IMR-90 (cell line): ENCODE measurements at regions of chr7 and their contacts with region 1.

Region 1: DNA sequence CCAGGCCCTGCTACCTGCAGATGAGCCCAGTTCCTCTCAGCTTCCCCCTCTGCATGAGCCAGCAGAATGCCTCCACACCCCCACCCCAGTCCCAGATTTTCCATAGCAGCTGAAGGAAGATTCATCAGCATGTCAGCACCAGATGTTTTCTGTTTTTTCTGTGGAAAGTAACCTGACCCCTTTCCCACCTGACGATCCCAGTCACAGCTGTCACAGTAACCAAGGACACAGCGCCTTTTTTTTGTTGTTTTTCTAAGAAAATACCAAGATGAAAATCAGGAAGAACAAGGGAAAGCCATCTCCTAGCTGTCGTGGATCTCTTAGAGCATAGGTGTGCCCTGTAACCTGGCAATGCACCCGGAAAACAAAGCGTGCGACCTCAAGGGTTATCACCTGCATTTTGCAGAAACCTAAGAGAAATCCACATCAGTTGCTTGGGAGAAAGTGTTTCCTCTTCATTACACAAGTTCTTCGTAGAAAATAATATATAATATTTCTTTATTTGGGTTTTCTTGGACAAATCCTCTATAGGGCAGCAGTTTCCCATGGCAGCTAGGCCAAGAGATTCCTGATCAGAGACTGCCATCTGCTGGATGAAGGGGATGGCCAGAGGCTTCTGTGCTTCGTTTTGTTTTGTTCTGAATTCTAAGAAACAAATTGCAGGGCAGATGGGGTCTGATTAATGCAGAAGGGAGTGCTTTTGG is 401.9 kb downstream of the TNS3 start:
- DNase-seq: peak; percentile 72
- ATAC-seq: peak; percentile 97
- H3K4me3 ChIP-seq: no peak overlapping the region
- H3K27ac ChIP-seq: no peak overlapping the region
- H3K4me1 ChIP-seq: peaks cover 7% of the 10 kb centered on the region; the same call in 1 of the 2 replicates
- H3K27me3 ChIP-seq: peaks cover 27% of the 10 kb centered on the region
- CTCF ChIP-seq: peak; percentile 96
- POLR2A ChIP-seq: no peak
- RAD21 ChIP-seq: peak; percentile 97

Region 2: DNA sequence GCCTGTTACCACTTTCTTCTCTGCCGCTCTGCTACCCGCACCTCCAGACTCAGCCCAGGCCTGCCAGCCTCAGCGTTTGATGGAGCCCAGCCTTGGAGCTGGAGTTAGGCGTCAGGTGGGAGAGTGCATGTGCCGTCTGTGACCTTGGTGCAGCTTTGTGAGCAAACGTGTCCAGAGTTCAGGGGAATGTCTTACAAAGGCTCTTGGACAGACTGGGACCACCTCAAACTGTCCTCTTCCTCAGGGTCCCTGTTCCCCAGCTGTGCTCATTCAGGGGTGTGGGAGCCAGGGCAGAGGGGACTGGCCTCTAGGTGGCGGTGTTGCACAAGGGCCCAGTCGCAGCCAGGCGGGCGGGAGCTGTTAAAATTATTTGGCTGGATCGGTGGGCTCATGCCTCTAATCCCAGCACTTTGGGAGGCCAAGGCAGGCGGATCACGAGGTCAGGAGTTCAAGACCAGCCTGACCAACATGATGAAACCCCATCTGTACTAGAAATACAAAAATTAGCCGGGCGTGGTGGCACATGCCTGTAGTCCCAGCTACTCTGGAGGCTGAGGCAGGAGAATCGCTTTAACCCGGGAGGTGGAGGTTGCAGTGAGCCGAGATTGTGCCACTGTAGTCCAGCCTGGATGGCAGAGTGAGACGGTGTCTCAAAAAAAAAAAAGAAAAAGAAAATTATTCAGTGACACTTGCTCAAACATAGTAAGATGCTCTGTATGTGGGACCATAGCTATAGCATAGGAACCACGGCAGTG is 1516.6 kb before region 1 on chr7:
- CTCF ChIA-PET with region 1: no interaction called
- POLR2A ChIA-PET with region 1: no interaction called
- dilution Hi-C with region 1: no loop called
- in situ Hi-C with region 1: no loop called
- intact Hi-C with region 1: loop called (anchors 2 kb)
- DNase-seq: peak; percentile 12
- ATAC-seq: peak; percentile 80
- H3K4me3 ChIP-seq: no peak overlapping the region
- H3K27ac ChIP-seq: no peak overlapping the region
- H3K4me1 ChIP-seq: no peaks in the 10 kb centered on the region
- H3K27me3 ChIP-seq: peaks cover 12% of the 10 kb centered on the region; the same call in 1 of the 2 replicates
- CTCF ChIP-seq: peak; percentile 78
- POLR2A ChIP-seq: no peak
- RAD21 ChIP-seq: peak; percentile 83

Region 3: DNA sequence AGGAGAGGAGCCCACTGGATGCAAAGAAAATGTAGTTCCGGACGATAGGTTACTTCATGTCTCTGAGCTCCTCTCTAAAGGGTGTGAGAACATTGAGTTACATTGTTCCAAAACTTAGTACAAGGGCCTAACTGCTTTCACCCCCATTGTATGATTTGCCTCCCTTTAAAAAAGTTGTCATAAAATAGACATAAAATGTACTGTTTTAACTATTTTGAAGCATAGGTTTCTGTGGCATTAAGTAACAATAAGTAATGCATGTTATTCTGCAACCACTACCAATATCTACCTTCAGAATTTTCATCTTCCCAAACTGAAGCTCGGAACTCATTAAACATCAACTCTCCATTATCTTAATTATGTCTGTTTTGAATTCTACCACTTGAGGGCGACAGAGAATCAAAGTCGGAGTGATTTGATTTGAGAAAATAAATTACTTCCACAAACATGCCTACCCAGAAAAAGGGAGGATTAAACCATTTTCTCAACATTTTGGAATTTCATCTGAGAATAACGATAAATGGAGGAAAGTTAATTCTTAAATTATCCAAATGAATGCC is 1289.0 kb before region 1 on chr7:
- CTCF ChIA-PET with region 1: interaction called, 5 read pairs
- POLR2A ChIA-PET with region 1: no interaction called
- dilution Hi-C with region 1: no loop called
- in situ Hi-C with region 1: loop called (anchors 5 kb)
- intact Hi-C with region 1: loop called (anchors 1 kb)
- DNase-seq: peak; percentile 53
- ATAC-seq: no peak
- H3K4me3 ChIP-seq: no peak overlapping the region
- H3K27ac ChIP-seq: no peak overlapping the region
- H3K4me1 ChIP-seq: no peaks in the 10 kb centered on the region
- H3K27me3 ChIP-seq: peaks cover 40% of the 10 kb centered on the region
- CTCF ChIP-seq: peak; percentile 79
- POLR2A ChIP-seq: no peak
- RAD21 ChIP-seq: peak; percentile 79

Region 4: DNA sequence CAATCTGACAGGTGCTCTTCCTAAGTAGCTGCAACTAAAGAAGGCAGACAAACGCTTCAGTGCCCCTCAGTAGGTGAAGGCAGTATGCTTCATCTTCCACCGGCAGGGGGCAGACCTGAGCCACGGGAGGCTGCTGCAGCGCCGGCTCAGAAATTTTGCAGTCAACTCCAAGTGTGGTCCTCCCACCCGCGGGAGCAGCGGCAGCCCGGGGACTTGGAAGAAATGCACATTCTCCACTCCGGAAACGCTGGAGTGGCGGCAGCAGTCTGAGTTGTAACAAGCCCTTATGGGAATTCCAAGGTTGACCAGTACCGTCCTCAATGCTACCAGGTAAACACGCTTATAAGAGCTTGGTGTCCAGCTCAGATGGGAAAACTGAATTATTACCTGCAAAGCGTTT is 1262.3 kb before region 1 on chr7:
- CTCF ChIA-PET with region 1: interaction called, 4 read pairs
- POLR2A ChIA-PET with region 1: no interaction called
- dilution Hi-C with region 1: no loop called
- in situ Hi-C with region 1: loop called (anchors 5 kb)
- intact Hi-C with region 1: loop called (anchors 1 kb)
- DNase-seq: peak; percentile 64
- ATAC-seq: peak; percentile 53
- H3K4me3 ChIP-seq: peak overlapping the region; percentile 34
- H3K27ac ChIP-seq: no peak overlapping the region
- H3K4me1 ChIP-seq: peaks cover 9% of the 10 kb centered on the region
- H3K27me3 ChIP-seq: no peaks in the 10 kb centered on the region
- CTCF ChIP-seq: peak; percentile 90
- POLR2A ChIP-seq: 0 out of 2 replicates have a peak, but pooled peaks have one; percentile 40
- RAD21 ChIP-seq: peak; percentile 83

Region 5: GRCh38 chr7:46352004-46352954 is 827.7 kb before region 1 on chr7:
- CTCF ChIA-PET with region 1: no interaction called
- POLR2A ChIA-PET with region 1: no interaction called
- dilution Hi-C with region 1: no loop called
- in situ Hi-C with region 1: loop called (anchors 5 kb)
- intact Hi-C with region 1: loop called (anchors 1 kb)
- DNase-seq: peak; percentile 72
- ATAC-seq: peak; percentile 70
- H3K4me3 ChIP-seq: no peak overlapping the region
- H3K27ac ChIP-seq: no peak overlapping the region
- H3K4me1 ChIP-seq: peaks cover 6% of the 10 kb centered on the region; the same call in 1 of the 2 replicates
- H3K27me3 ChIP-seq: no peaks in the 10 kb centered on the region
- CTCF ChIP-seq: peak; percentile 83
- POLR2A ChIP-seq: no peak
- RAD21 ChIP-seq: peak; percentile 97

Region 6: GRCh38 chr7:46776790-46777189 is 403.2 kb before region 1 on chr7:
- CTCF ChIA-PET with region 1: no interaction called
- POLR2A ChIA-PET with region 1: no interaction called
- dilution Hi-C with region 1: no loop called
- in situ Hi-C with region 1: no loop called
- intact Hi-C with region 1: loop called (anchors 5 kb)
- DNase-seq: peak; percentile 36
- ATAC-seq: no peak
- H3K4me3 ChIP-seq: no peak overlapping the region
- H3K27ac ChIP-seq: no peak overlapping the region
- H3K4me1 ChIP-seq: no peaks in the 10 kb centered on the region
- H3K27me3 ChIP-seq: no peaks in the 10 kb centered on the region
- CTCF ChIP-seq: peak; percentile 55
- POLR2A ChIP-seq: no peak
- RAD21 ChIP-seq: peak; percentile 67

Region 7: DNA sequence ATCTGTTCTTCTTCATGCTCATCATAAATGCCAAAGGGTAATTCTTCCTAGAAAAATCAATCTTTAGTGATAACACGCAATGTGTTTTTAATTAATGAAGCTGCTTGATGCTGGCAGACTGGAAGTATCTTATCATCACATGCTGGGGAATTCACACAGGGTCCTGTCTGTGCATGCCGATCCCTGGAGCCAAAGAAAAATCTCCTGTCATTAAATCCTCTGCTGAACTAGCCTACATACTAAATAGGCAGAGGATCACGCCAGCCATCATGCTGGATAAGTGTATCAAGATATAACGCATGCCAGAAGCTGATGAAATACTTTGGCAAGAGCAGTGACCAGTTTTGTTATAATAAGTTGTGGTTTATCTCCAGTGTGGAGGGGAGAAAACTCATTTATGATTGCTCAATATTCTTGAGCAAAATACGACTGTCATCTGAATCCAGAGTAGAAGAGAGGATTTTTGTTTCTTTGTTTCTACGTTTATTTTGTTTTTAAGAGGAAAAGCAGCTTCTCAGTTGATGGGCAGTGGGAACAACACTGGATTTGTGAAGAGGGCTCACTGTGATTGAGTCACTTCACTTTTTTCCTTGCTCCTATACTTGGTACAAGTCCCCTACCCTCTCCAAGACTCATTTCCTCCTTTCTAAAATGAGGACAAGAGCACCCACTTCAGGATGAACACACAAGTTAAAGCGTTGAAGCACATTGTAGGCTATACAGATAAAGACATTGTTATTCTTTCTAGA is 247.1 kb before region 1 on chr7:
- CTCF ChIA-PET with region 1: no interaction called
- POLR2A ChIA-PET with region 1: no interaction called
- dilution Hi-C with region 1: no loop called
- in situ Hi-C with region 1: no loop called
- intact Hi-C with region 1: loop called (anchors 5 kb)
- DNase-seq: peak; percentile 96
- ATAC-seq: peak; percentile 75
- H3K4me3 ChIP-seq: no peak overlapping the region
- H3K27ac ChIP-seq: peak overlapping the region; percentile 80; the same call in 1 of the 2 replicates
- H3K4me1 ChIP-seq: peaks cover 14% of the 10 kb centered on the region
- H3K27me3 ChIP-seq: no peaks in the 10 kb centered on the region
- CTCF ChIP-seq: peak; percentile 38
- POLR2A ChIP-seq: no peak
- RAD21 ChIP-seq: peak; percentile 50

Region 8: GRCh38 chr7:47031786-47032535 is 148.0 kb before region 1 on chr7:
- CTCF ChIA-PET with region 1: no interaction called
- POLR2A ChIA-PET with region 1: no interaction called
- dilution Hi-C with region 1: no loop called
- in situ Hi-C with region 1: no loop called
- intact Hi-C with region 1: no loop called
- DNase-seq: no peak
- ATAC-seq: no peak; the same call in 1 of the 2 replicates
- H3K4me3 ChIP-seq: no peak overlapping the region
- H3K27ac ChIP-seq: no peak overlapping the region
- H3K4me1 ChIP-seq: no peaks in the 10 kb centered on the region
- H3K27me3 ChIP-seq: peaks cover 16% of the 10 kb centered on the region
- CTCF ChIP-seq: no peak
- POLR2A ChIP-seq: no peak
- RAD21 ChIP-seq: no peak